IMR-90 (cell line): ENCODE measurements at regions of chr2 and their contacts with region 1.

Region 1: DNA sequence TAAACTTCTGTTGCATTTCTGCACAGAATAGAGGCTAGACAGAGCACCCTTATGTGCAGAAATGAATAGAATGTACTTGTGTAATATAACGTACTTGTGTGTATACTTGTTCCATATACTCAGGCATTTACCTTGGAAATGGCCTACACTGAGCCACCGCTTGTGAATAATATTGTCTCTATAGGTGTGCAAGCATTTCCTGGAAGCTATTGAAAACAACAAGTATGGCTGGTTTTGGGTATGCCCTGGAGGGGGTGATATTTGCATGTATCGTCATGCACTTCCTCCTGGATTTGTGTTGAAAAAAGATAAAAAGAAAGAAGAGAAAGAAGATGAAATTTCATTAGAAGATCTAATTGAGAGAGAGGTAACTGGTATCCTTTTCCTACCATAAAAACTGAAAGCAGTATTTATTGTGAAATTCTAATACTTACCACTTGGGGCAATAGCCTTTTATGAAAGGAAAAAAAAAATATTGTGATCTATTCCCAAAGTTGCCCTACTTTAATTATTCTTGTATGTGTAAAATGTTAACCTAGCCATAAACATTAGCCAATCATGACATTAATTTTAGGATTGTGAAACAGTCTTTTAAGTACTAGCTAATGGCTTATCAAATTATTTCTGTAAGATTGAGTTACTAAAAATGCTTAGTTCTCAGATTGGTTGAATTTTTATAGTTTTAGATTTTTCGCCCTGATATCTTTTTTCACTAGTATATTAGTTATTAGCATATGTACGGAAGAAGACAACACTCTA is 18.0 kb downstream of the ZC3H15 start:
- DNase-seq: peak; percentile 37
- ATAC-seq: peak; percentile 74; the same call in 1 of the 2 replicates
- H3K4me3 ChIP-seq: no peak overlapping the region
- H3K27ac ChIP-seq: no peak overlapping the region
- H3K4me1 ChIP-seq: no peaks in the 10 kb centered on the region
- H3K27me3 ChIP-seq: no peaks in the 10 kb centered on the region
- CTCF ChIP-seq: peak; percentile 62
- POLR2A ChIP-seq: no peak
- RAD21 ChIP-seq: peak; percentile 73

Region 2: GRCh38 chr2:186641807-186642321 is 137.8 kb after region 1 on chr2:
- CTCF ChIA-PET with region 1: interaction called, 26 read pairs
- POLR2A ChIA-PET with region 1: no interaction called
- dilution Hi-C with region 1: no loop called
- in situ Hi-C with region 1: loop called (anchors 5 kb)
- intact Hi-C with region 1: loop called (anchors 1 kb)
- DNase-seq: peak; percentile 78
- ATAC-seq: peak; percentile 87
- H3K4me3 ChIP-seq: no peak overlapping the region
- H3K27ac ChIP-seq: no peak overlapping the region
- H3K4me1 ChIP-seq: peaks cover 14% of the 10 kb centered on the region
- H3K27me3 ChIP-seq: no peaks in the 10 kb centered on the region
- CTCF ChIP-seq: peak; percentile 86
- POLR2A ChIP-seq: no peak
- RAD21 ChIP-seq: peak; percentile 95

Region 3: GRCh38 chr2:186848873-186849578 is 345.0 kb after region 1 on chr2 and contains the start of gene ZSWIM2:
- CTCF ChIA-PET with region 1: no interaction called
- POLR2A ChIA-PET with region 1: no interaction called
- dilution Hi-C with region 1: no loop called
- in situ Hi-C with region 1: loop called (anchors 25 kb)
- intact Hi-C with region 1: no loop called
- DNase-seq: peak; percentile 88
- ATAC-seq: peak; percentile 88
- H3K4me3 ChIP-seq: peak within 1 kb of the TSS; percentile 69
- H3K27ac ChIP-seq: peak within 1 kb of the TSS; percentile 65
- H3K4me1 ChIP-seq: peaks cover 3% of the 10 kb centered on the region; the same call in 1 of the 2 replicates
- H3K27me3 ChIP-seq: no peaks in the 10 kb centered on the region
- CTCF ChIP-seq: no peak
- POLR2A ChIP-seq: 0 out of 2 replicates have a peak, but pooled peaks have one; percentile 53
- RAD21 ChIP-seq: no peak
- total RNA-seq, gene ZSWIM2: 0.28 TPM in 1 of 2 replicates, not detected in the other